Activated CD8-positive, alpha-beta T cell treated with anti-CD3 and anti-CD28 coated beads, Interleukin-2, amount 10 ng/mL, durations not matched to agents 7 days and 5 days (primary cell): ENCODE measurements at regions of chr1 and their contacts with region 1.

Region 1: GRCh38 chr1:163071405-163072255 is 2.5 kb downstream of the RGS4 start:
- DNase-seq: peak; percentile 62
- ATAC-seq: no peak
- H3K4me3 Mint-ChIP-seq: no peak overlapping the region
- H3K27ac Mint-ChIP-seq: no peak overlapping the region
- H3K4me1 Mint-ChIP-seq: no peaks in the 10 kb centered on the region
- H3K27me3 Mint-ChIP-seq: peaks cover 26% of the 10 kb centered on the region

Region 2: DNA sequence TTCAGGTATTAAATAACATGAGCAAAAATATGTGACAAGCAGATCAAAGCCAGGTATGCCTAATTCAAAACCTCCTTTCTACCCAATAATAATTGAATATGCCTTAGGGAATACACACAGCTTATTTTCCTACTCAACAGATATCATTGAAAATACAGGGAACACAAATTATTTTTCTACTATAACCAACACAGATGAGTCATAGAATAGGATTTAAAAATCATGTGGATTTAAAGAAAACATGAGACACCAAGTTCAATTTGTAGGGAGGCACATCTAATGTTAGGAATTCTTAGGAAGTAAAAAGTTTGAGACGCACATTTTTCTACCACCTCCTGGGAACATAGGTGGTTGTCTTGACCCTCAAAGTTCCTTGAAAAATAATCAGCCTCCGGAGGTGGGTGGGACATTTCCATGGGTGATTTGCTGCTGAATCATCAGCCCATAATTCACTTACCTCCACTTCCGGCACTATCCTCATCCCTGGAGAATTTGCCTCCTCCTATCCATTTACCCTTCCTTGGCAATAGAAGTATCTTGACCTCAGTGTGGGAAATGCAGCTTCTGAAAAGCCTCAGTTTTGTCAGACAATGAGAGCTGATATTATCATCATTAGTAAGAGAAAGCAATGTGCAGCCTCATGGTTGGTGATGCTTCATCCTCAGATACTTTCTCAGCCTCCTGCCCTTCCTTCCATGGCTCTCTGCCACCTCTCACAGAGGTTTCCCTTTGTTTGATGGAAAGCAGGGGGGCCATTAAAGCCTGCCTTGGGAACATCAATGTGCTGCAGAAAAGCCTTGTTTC is 36.0 kb before region 1 on chr1:
- CTCF ChIA-PET with region 1: no interaction called
- POLR2A ChIA-PET with region 1: no interaction called
- DNase-seq: no peak
- ATAC-seq: no peak
- H3K4me3 Mint-ChIP-seq: no peak overlapping the region
- H3K27ac Mint-ChIP-seq: no peak overlapping the region
- H3K4me1 Mint-ChIP-seq: no peaks in the 10 kb centered on the region
- H3K27me3 Mint-ChIP-seq: no peaks in the 10 kb centered on the region

Region 3: DNA sequence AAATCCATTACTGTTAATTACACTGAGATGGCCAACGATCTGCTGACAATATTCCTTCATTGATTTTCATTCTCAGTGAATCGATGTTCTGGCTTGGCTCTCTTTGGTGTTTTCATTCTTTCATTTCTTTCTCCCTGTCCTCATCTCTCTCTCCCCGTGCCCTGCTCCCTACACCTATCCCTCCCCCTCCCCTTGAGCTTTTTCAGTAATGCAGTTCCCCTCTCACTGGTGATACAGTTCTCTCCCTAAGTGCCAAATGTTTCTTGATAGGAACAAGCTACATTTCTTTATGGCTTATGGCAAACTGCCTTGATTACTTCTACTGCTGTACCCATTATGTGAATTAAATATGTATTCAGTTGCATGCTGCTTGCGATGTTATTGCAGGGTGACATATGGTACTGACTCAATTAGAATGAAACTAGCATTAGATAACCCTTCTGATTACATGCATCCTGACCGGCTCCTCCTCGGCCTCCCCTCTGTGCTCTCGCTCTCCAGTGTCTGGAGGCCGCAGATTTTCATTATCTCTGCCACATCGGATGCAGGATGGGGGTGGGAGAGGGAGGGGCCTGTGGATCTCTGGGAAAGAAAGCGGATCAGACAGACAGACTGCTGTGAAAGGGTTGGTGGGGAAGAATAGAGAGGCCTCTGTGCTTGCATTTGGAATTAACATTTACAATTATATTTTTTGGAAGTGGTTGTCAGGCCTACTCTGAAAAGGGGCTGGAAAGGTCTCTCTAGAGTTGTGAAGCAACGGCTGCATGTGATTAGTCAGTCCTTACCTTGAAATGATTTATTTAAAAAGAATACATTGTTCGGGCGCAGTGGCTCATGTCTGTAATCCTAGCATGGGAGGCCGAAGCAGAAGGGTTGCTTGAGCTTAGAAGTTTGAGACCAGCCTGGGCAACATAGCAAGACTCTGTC is 1618.3 kb after region 1 on chr1:
- CTCF ChIA-PET with region 1: no interaction called
- POLR2A ChIA-PET with region 1: interaction called, 10 read pairs
- DNase-seq: no peak
- ATAC-seq: no peak
- H3K4me3 Mint-ChIP-seq: no peak overlapping the region
- H3K27ac Mint-ChIP-seq: no peak overlapping the region
- H3K4me1 Mint-ChIP-seq: no peaks in the 10 kb centered on the region
- H3K27me3 Mint-ChIP-seq: no peaks in the 10 kb centered on the region